GM10248 (cell line): ENCODE measurements at regions of chr10 and their contacts with region 1.

Region 1: DNA sequence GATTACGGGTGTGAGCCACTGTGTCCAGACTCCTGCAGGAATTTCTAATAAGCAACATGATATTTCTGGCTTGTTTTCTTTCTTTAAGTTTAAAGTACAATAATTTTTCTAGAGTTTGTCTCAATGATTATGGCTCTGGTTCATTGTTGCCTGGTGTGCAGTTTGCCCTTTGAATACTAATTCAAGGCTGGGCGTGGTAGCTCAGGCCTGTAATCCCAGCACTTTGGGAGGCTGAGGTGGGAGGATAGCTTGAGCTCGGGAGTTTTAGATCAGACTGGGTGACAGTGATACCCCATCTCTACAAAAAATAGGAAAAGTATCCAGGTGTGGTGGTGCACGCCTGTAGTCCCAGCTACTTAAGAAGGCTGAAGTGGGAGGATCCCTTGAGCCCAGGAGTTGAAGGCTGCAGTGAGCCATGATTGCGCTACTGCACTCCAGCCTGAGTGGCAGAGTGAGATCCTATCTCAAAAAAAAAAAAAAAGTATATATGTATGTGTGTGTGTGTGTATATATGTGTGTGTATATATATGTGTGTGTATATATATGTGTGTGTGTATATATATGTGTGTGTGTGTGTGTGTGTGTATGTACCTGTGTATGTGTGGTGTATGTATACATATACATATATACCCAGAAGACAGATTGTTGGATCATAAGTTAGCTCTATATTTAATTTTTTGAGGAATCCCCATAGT is 8.2 kb downstream of the ADIRF start:
- DNase-seq: no peak
- CTCF ChIP-seq: no peak

Region 2: DNA sequence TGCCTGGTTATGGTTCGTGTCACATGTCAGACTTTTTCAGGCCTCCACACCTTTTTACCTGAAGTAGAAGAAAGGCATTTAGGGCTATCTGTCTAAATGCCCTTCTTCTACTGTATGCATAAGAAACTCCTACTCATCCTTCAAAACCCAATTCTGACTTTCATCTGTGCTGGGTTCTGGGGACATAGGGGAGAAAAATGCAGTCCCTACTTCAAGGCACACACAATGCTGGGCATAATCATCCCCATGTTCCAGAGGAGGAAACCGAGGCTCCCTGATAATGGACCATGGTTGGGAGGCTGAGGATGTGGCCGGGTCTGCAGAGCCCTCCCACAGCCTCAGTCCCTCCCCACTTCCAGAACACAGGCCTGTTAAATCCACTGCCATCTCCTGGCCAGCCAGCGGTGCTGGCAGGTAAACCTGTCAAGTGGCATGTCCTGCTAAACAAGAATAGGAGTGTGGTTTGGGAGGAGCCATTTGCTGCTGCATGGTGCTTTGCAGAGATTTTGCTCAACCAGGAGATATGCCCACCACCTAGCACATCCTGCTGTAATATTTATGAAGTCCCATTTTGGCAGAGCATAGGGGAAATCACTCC is 641.9 kb before region 1 on chr10:
- CTCF ChIA-PET with region 1: no interaction called
- POLR2A ChIA-PET with region 1: no interaction called
- DNase-seq: no peak
- CTCF ChIP-seq: no peak

Region 3: GRCh38 chr10:86965986-86966654 is 10.4 kb before region 1 on chr10:
- CTCF ChIA-PET with region 1: interaction called, 14 read pairs
- POLR2A ChIA-PET with region 1: no interaction called
- DNase-seq: peak; percentile 39
- CTCF ChIP-seq: no peak

Region 4: GRCh38 chr10:87715552-87716347 is 739.2 kb after region 1 on chr10:
- CTCF ChIA-PET with region 1: no interaction called
- POLR2A ChIA-PET with region 1: no interaction called
- DNase-seq: no peak
- CTCF ChIP-seq: no peak